ENCODE measurements at regions of chr1 and their contacts with region 1.

Region 1: DNA sequence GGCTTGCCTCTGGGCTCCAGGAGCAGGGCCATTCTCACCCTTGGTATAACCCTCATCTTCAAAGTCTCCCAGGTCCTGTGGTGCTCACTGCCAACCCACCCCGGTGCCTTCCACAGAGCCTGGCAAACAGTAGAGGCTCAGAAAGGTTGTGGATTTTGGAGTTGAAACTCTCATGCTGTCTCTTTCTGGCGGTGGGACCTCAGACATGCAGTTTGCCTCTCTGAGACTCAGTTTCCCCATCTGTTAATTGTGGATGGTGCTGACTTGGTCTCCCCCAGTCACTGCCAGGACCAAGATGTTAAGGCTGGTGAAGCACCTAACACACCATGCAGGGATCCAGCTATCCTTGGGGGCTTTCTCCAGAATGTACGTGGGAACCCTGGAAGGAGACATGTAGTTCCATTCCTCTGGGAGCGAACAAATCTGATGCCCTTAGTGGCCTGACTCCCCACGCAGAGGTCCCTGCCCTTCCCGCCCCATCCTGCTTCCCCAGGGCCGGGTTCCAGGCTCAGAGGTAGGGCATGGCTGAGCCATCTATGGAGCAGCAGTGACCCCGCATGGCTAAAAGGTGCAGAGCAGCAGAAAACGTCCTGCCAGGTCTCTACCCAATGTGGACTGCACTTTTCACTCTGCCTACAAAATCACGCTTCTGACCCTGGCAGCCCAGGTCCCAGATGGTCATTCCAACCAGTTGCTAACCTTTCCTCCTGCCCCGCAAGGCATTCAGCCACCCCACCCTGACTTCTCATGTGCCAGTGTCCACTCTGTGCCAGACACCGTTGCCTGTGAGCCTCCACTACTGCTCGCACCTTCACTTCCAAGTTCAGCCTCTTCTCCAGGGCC is 9.2 kb upstream of the TTC22 start:
- DNase-seq: peak in 2 of 3 donors; percentile 88 to 90
- ATAC-seq: peak; percentile 81
- H3K4me3 ChIP-seq: no peak overlapping the region
- H3K4me1 ChIP-seq: peaks cover 14% of the 10 kb centered on the region
- CTCF ChIP-seq: peak; percentile 87

Region 2: GRCh38 chr1:54671985-54672608 is 138.2 kb before region 1 on chr1:
- intact Hi-C with region 1: loop called in 1 of 2 experiments (anchors 5 kb)
- DNase-seq: peak in 2 of 3 donors; percentile 65 to 81
- ATAC-seq: peak; percentile 93
- H3K4me3 ChIP-seq: no peak overlapping the region
- H3K4me1 ChIP-seq: no peaks in the 10 kb centered on the region
- CTCF ChIP-seq: peak; percentile 77

Measured in mucosa of descending colon (tissue), 3 donors.